ENCODE measurements at regions of chr2 and their contacts with region 1.

Region 1: GRCh38 chr2:73468376-73468775 is 82.7 kb downstream of the ALMS1 start:
- DNase-seq: no peak
- H3K4me3 ChIP-seq: no peak overlapping the region
- H3K27ac ChIP-seq: no peak overlapping the region
- H3K4me1 ChIP-seq: no peaks in the 10 kb centered on the region
- H3K27me3 ChIP-seq: no peaks in the 10 kb centered on the region
- CTCF ChIP-seq: no peak
- POLR2A ChIP-seq: no peak

Region 2: GRCh38 chr2:73408198-73408597 is 60.2 kb before region 1 on chr2:
- CTCF ChIA-PET with region 1: no interaction called
- POLR2A ChIA-PET with region 1: no interaction called
- dilution Hi-C with region 1: no loop called
- intact Hi-C with region 1: no loop called
- DNase-seq: no peak
- H3K4me3 ChIP-seq: no peak overlapping the region
- H3K27ac ChIP-seq: no peak overlapping the region
- H3K4me1 ChIP-seq: no peaks in the 10 kb centered on the region
- H3K27me3 ChIP-seq: no peaks in the 10 kb centered on the region
- CTCF ChIP-seq: no peak
- POLR2A ChIP-seq: no peak

Region 3: GRCh38 chr2:73488079-73488478 is 19.7 kb after region 1 on chr2:
- CTCF ChIA-PET with region 1: interaction called, 13 read pairs
- POLR2A ChIA-PET with region 1: no interaction called
- dilution Hi-C with region 1: no loop called
- intact Hi-C with region 1: no loop called
- DNase-seq: no peak
- H3K4me3 ChIP-seq: no peak overlapping the region
- H3K27ac ChIP-seq: no peak overlapping the region
- H3K4me1 ChIP-seq: no peaks in the 10 kb centered on the region
- H3K27me3 ChIP-seq: no peaks in the 10 kb centered on the region
- CTCF ChIP-seq: no peak
- POLR2A ChIP-seq: no peak

Region 4: DNA sequence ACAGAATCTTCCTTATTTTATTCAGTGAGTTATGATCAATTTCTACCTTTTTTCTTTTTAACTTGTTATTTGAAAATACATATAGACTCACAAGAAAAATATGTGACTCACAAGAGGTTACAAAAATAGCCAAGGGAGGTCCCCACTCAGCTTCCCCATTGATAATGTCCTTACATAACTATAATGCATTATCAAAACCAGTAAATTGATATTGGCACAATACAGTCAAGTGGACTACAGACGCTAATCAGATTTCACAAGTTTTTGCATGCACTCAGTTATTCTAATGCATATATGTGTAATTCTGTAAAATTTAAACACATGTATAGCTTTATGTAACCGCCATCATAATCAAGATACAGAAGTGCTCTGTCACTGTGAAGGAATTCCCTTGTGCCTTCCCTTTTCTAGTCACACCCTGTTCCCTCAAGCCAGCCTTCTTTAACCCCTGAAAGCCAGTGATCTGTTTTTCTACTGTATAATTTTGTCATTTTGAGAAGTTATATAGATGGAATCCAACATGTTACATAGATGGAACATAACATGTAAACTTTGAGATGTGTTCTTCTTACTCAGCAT is 35.7 kb after region 1 on chr2:
- CTCF ChIA-PET with region 1: no interaction called
- POLR2A ChIA-PET with region 1: no interaction called
- dilution Hi-C with region 1: no loop called
- intact Hi-C with region 1: no loop called
- DNase-seq: peak; percentile 7
- H3K4me3 ChIP-seq: no peak overlapping the region
- H3K27ac ChIP-seq: no peak overlapping the region
- H3K4me1 ChIP-seq: no peaks in the 10 kb centered on the region
- H3K27me3 ChIP-seq: no peaks in the 10 kb centered on the region
- CTCF ChIP-seq: no peak
- POLR2A ChIP-seq: no peak